IMR-90 (cell line): ENCODE measurements at regions of chr19 and their contacts with region 1.

Region 1: DNA sequence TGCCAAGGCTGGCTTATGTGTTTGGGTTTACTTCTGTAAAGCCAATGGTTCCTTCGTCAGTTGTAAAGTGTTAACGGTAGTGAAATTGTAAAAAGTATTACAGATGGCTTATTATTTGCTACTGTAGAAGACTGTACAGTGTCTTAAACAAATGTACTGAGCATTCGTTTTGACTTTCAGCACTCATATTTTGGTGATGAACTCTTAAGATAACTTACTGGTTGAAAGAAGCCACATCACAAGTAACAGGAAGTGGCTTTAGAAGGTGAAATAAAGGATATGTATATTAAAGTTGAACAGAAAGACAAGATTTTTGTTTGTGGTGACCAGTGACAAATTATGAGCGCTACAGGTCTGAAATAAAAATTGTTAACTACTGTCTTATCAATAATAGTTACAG is 64.2 kb downstream of the URI1 start:
- DNase-seq: no peak
- ATAC-seq: no peak
- H3K4me3 ChIP-seq: no peak overlapping the region
- H3K27ac ChIP-seq: no peak overlapping the region
- H3K4me1 ChIP-seq: no peaks in the 10 kb centered on the region; the same call in 1 of the 2 replicates
- H3K27me3 ChIP-seq: no peaks in the 10 kb centered on the region
- CTCF ChIP-seq: no peak
- POLR2A ChIP-seq: no peak
- RAD21 ChIP-seq: no peak

Region 2: GRCh38 chr19:29966588-29967249 is 39.5 kb before region 1 on chr19:
- CTCF ChIA-PET with region 1: interaction called, 3 read pairs
- POLR2A ChIA-PET with region 1: no interaction called
- dilution Hi-C with region 1: no loop called
- in situ Hi-C with region 1: no loop called
- intact Hi-C with region 1: loop called (anchors 5 kb)
- DNase-seq: peak; percentile 34
- ATAC-seq: 0 out of 2 replicates have a peak, but pooled peaks have one; percentile 34
- H3K4me3 ChIP-seq: no peak overlapping the region
- H3K27ac ChIP-seq: no peak overlapping the region
- H3K4me1 ChIP-seq: peaks cover 25% of the 10 kb centered on the region
- H3K27me3 ChIP-seq: no peaks in the 10 kb centered on the region
- CTCF ChIP-seq: peak; percentile 23; the same call in 1 of the 2 replicates
- POLR2A ChIP-seq: no peak
- RAD21 ChIP-seq: 0 out of 2 replicates have a peak, but pooled peaks have one; percentile 23